PC-9 (cell line): ENCODE measurements at regions of chr3 and their contacts with region 1.

Region 1: DNA sequence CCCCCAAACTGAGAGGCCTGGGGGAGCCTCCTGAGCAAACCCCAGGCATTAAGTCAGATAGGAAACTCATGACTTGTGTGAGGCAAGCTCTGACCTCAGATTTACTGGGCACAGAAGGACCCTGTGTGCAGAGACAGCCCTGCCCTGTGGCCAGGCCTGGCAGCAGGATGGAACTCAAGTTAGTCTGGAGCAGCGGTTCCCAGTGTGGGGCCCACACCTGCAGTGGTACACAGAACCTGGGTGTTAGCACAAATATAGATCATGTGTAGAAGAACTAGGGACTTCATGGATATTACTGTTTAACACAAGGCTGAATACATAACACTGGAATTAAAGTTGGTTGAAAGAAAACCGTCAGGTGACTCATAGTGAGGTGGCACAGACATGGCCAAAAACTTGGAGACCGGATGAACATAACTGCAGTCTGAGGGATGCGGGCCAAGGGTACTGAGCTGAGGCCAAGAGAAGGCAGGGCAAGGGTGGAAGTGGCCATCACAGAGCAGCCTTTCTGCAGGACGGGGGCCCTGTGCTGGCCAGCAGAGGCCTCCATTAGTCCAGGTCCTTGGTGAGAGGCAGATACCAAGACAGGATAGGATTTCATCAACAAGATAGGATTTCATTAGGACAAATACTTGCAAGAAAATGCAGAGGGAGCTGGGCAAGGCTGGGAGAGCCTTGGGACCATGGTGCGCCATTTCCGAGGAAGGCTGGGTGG is 40.9 kb downstream of the IRAK2 start:
- DNase-seq: peak; percentile 76 to 86
- H3K4me3 ChIP-seq: no peak overlapping the region
- H3K27ac ChIP-seq: peak overlapping the region; percentile 97
- H3K4me1 ChIP-seq: peaks cover 71% of the 10 kb centered on the region
- H3K27me3 ChIP-seq: no peaks in the 10 kb centered on the region
- CTCF ChIP-seq: no peak

Region 2: GRCh38 chr3:9916734-9917680 is 288.6 kb before region 1 on chr3 and contains the start of gene IL17RC:
- CTCF ChIA-PET with region 1: no interaction called
- POLR2A ChIA-PET with region 1: no interaction called
- intact Hi-C with region 1: no loop called
- DNase-seq: peak; percentile 86 to 91
- H3K4me3 ChIP-seq: peak within 1 kb of the TSS; percentile 70
- H3K27ac ChIP-seq: no peak within 1 kb of the TSS
- H3K4me1 ChIP-seq: peaks cover 41% of the 10 kb centered on the region
- H3K27me3 ChIP-seq: no peaks in the 10 kb centered on the region
- CTCF ChIP-seq: no peak
- total RNA-seq, gene IL17RC: 45.0 and 54.6 TPM in 2 replicates

Region 3: DNA sequence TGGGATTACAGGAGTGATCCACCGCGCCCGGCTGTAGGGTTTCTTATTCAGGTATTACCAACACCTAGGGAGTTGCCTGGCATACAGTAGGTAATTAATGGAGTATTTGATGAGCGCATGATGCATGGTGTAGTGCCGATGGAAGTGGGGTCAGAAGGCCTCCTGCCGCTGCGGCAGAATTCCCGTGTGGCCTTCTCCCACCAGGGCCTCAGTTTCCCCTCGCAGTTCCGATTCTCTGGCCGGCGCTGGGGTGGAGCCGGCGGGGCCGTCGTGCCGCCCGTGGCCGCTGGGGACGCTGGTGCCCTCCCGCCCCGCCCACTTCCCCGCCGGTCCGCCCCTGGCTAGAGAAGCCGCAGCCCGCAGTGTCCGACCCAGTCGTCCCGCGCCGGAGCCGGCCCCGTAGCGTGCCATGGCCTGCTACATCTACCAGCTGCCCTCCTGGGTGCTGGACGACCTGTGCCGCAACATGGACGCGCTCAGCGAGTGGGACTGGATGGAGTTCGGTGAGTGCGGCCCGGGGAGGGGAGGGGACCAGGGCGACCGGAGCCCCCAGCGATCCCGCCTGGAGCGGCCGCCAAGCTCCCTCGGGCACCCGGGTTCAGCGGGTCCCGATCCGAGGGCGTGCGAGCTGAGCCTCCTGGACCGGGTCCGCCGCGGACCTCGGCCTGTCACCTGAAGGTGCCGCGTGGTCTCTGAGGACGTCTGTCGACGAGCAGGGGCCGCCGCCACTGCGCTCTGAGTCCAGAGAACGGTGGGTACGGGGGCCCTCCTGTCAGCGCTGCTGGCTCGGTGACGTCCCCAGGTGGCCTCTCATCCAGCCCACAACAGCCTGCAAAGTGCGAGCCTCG is 40.8 kb before region 1 on chr3 and contains the start of gene IRAK2:
- CTCF ChIA-PET with region 1: no interaction called
- POLR2A ChIA-PET with region 1: no interaction called
- intact Hi-C with region 1: loop called (anchors 2 kb)
- DNase-seq: peak in 1 of 2 experiments; percentile 65
- H3K4me3 ChIP-seq: peak within 1 kb of the TSS; percentile 99
- H3K27ac ChIP-seq: peak within 1 kb of the TSS; percentile 50
- H3K4me1 ChIP-seq: peaks cover 26% of the 10 kb centered on the region
- H3K27me3 ChIP-seq: no peaks in the 10 kb centered on the region
- CTCF ChIP-seq: peak; percentile 74
- total RNA-seq, gene IRAK2: 2.6 and 2.7 TPM in 2 replicates